Esophagus muscularis mucosa (tissue), 4 donors: ENCODE measurements at regions of chr15 and their contacts with region 1.

Region 1: GRCh38 chr15:90902040-90902839 is 862 bp upstream of the MAN2A2 start:
- DNase-seq: peak; percentile 93
- H3K4me3 ChIP-seq: peak overlapping the region; percentile 73 to 96 (median 86)
- H3K27ac ChIP-seq: peak overlapping the region; percentile 90 to 97 (median 96)
- H3K4me1 ChIP-seq: peaks cover 16 to 43% (median 32%) of the 10 kb centered on the region in 4 donors
- H3K27me3 ChIP-seq: no peaks in the 10 kb centered on the region
- CTCF ChIP-seq: peak; percentile 75 to 80 (median 79)
- EP300 ChIP-seq: no peak
- POLR2A ChIP-seq: peak; percentile 30

Region 2: DNA sequence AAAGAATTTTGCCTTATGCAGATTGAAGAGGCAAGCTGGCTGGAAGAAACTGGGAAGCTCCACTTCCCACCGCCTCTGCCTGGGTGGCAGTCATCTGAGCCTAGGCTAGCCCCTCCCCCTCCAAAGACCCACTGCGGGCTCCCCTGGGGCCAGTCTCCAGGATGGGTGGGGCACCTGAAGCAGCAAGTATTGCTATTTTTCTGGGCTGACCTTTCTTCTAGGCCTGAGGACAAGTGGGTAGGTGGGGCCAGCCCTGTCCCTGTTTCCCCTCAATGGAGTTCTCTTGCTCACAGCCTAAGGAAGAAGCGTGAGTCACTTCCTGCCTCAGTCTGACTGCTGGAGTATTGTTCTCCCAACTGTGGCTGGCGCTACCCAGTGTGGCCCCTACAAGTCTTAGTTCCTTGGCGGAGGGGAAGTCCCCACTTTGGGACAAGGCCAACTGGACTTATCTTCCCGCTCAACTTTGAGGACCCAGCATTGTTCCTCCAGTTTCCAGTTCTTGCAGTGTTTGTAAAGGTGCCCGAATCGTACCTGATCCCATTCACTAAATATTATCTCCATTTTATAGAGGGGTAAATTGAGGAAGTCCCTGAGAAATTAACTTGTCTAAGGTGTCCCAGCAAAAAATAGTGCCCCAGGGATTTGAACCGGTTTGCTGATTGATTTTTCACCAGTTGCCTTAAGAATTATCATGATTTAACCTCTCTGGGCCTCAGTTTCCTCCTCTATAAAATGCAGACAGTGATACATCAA is 32.5 kb before region 1 on chr15:
- intact Hi-C with region 1: loop called (anchors 1 kb)
- DNase-seq: no peak
- H3K4me3 ChIP-seq: peak overlapping the region in 1 of 4 donors; percentile 85
- H3K27ac ChIP-seq: peak overlapping the region; percentile 92 to 96 (median 96)
- H3K4me1 ChIP-seq: peaks cover 46 to 56% (median 49%) of the 10 kb centered on the region in 4 donors
- H3K27me3 ChIP-seq: peaks cover 0 to 5% (median 0%) of the 10 kb centered on the region in 4 donors
- CTCF ChIP-seq: no peak
- EP300 ChIP-seq: no peak
- POLR2A ChIP-seq: no peak

Region 3: GRCh38 chr15:90931737-90932659 is 29.8 kb after region 1 on chr15 and contains the start of gene HDDC3:
- intact Hi-C with region 1: loop called (anchors 1 kb)
- DNase-seq: peak; percentile 95
- H3K4me3 ChIP-seq: peak within 1 kb of the TSS; percentile 70 to 89 (median 80)
- H3K27ac ChIP-seq: peak within 1 kb of the TSS; percentile 86 to 94 (median 88)
- H3K4me1 ChIP-seq: peaks cover 43 to 72% (median 64%) of the 10 kb centered on the region in 4 donors
- H3K27me3 ChIP-seq: no peaks in the 10 kb centered on the region
- CTCF ChIP-seq: peak; percentile 85 to 99 (median 91)
- EP300 ChIP-seq: no peak
- POLR2A ChIP-seq: no peak
- total RNA-seq, gene HDDC3: 5.1 to 7.9 (median 6.0) TPM